PC-9 (cell line): ENCODE measurements at regions of chr17 and their contacts with region 1.

Region 1: DNA sequence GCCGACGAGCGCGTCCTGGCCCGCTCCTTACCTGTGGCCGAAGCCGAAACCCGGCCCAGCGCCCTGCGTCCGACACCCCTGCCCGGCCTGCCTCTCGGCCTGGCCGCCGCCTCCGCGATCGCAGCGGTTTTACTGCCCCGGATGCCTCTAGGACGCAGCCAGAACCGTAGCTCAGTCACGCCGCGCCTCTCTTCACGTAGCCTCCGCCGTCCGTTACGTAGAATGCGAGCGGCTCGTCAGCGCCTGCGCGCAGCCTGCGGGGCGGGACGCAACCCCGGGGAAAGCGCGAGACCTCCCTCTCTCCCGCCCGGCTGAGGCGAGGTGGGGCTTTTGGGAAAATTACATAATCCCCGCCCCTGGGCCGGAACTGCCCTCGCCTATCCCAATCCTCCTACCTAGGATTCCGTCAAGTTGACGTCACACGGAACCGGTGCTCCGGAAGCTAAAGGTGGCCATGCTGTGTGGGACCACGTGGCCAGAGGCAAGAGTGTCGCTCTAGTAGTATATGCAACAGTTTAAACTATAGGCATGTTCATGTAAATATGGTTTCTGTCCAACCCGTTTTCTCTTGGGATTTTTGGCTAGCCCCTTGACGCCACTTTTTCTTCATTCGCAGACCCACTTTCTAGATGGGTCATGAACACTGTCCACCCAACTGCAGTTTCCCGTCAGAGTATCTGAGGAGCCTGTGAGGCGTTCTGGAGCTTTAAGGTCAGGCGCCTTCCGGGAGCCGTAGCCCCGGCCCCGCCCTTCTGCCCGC is at the start of gene CCDC47:
- DNase-seq: peak; percentile 96 to 99
- H3K4me3 ChIP-seq: peak within 1 kb of the TSS; percentile 80
- H3K27ac ChIP-seq: peak within 1 kb of the TSS; percentile 96
- H3K4me1 ChIP-seq: peaks cover 50% of the 10 kb centered on the region
- H3K27me3 ChIP-seq: no peaks in the 10 kb centered on the region
- CTCF ChIP-seq: no peak
- total RNA-seq, gene CCDC47: 64.0 and 89.3 TPM in 2 replicates

Region 2: GRCh38 chr17:62791751-62792445 is 981.7 kb before region 1 on chr17:
- CTCF ChIA-PET with region 1: no interaction called
- POLR2A ChIA-PET with region 1: interaction called, 16 read pairs
- intact Hi-C with region 1: no loop called
- DNase-seq: peak; percentile 67 to 98
- H3K4me3 ChIP-seq: peak overlapping the region; percentile 21; the same call in 1 of the 2 replicates
- H3K27ac ChIP-seq: peak overlapping the region; percentile 94
- H3K4me1 ChIP-seq: peaks cover 47% of the 10 kb centered on the region
- H3K27me3 ChIP-seq: no peaks in the 10 kb centered on the region
- CTCF ChIP-seq: no peak

Region 3: GRCh38 chr17:63741221-63742049 is 32.1 kb before region 1 on chr17 and contains the start of gene STRADA:
- CTCF ChIA-PET with region 1: no interaction called
- POLR2A ChIA-PET with region 1: no interaction called
- intact Hi-C with region 1: loop called (anchors 2 kb)
- DNase-seq: peak; percentile 97 to 99
- H3K4me3 ChIP-seq: peak within 1 kb of the TSS; percentile 91
- H3K27ac ChIP-seq: peak within 1 kb of the TSS; percentile 72
- H3K4me1 ChIP-seq: peaks cover 15% of the 10 kb centered on the region
- H3K27me3 ChIP-seq: no peaks in the 10 kb centered on the region
- CTCF ChIP-seq: no peak
- total RNA-seq, gene STRADA: 28.8 and 30.6 TPM in 2 replicates

Region 4: DNA sequence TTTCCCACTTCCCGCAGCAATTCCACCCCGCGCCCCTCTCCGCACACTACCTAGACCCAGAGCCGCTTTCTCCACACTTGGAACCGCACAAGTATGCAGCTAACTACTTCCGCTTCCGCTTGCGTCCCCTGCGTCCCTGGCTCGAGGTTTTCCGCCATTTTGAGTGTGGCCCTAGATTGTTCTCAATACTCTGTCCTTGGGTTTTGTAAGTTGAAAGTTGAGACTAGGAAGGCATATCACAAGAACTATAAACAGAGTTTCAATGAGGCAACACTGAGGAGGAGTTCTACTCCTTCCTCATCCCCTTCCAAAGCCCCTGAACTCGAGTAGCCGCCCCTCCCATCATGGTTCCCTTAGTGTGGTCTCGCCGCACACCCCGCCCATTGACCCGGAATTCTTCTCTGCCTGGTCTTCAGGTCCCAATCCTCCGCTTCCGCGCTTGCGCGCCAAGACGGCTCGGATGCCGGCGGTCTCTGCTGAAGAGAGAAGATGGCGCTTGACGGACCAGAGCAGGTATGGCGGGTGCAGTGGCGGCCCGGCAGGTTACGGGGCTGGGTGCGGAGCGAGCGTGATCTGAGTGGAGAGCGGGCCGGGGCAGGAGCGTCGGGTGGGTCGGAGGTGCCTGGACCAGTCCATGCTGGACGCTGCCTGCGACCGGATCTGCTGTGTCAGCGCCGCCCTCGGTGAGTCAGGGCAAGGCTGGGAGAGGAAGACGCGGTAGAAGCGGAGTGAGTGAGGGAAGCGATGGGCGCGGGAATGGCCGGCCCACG is 53.6 kb after region 1 on chr17 and contains the starts of genes FTSJ3 and PSMC5:
- CTCF ChIA-PET with region 1: no interaction called
- POLR2A ChIA-PET with region 1: interaction called, 32 read pairs
- intact Hi-C with region 1: loop called (anchors 2 kb)
- DNase-seq: peak; percentile 88 to 90
- H3K4me3 ChIP-seq: peak within 1 kb of the TSS; percentile 70
- H3K27ac ChIP-seq: peak within 1 kb of the TSS; percentile 89
- H3K4me1 ChIP-seq: peaks cover 18% of the 10 kb centered on the region
- H3K27me3 ChIP-seq: no peaks in the 10 kb centered on the region
- CTCF ChIP-seq: peak; percentile 38; the same call in 1 of the 2 replicates
- total RNA-seq, gene FTSJ3: 36.9 and 44.0 TPM in 2 replicates
- total RNA-seq, gene PSMC5: 128 and 150 TPM in 2 replicates

Region 5: DNA sequence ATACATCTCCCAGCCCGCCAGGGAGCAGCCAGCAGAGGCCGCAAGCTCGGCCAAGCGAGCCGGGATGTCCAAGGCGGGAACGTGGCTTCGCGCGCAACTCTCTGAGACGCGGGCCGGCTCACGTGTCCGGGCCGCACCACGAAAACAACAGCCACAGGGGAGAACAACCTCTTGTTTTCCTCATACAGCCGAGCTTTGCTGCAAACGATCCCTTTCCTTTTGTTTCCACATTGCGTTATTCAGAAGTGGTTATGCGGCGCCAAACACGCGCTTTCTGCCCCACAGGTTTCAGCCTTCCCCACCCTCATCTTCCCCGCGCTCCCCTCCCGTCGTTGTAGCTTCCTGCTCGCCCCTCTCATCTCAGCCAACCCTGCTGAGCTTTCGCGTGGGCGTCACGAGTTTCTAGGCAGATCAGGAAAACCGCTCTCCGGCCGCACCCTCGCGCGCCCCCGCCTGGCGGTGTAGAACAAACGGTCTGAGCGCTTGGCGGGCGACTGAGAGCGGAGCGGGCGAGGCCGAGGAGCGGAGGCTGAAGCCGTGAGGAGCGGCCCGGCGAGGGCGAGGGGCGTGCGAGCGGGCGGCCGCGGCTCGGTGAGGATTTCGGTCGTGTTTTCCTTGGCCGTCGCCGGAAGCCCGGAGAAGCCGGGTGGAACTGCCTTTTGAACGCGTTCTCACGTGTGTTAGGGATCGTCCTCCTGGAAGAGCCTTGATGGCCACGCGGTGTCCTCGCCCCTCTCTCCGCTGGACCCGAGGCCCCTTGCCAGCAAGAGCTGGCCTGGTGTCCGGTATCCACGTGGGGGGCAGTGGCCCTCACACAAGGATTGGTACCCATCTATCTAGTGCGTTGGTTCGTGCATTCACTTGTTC is 75.5 kb after region 1 on chr17:
- CTCF ChIA-PET with region 1: no interaction called
- POLR2A ChIA-PET with region 1: interaction called, 28 read pairs
- intact Hi-C with region 1: no loop called
- DNase-seq: peak; percentile 85 to 96
- H3K4me3 ChIP-seq: peak overlapping the region; percentile 44; the same call in 1 of the 2 replicates
- H3K27ac ChIP-seq: peak overlapping the region; percentile 67
- H3K4me1 ChIP-seq: no peaks in the 10 kb centered on the region; the same call in 1 of the 2 replicates
- H3K27me3 ChIP-seq: no peaks in the 10 kb centered on the region
- CTCF ChIP-seq: peak; percentile 80